Heart right ventricle (tissue), 16 donors: ENCODE measurements at regions of chr4 and their contacts with region 1.

Region 1: DNA sequence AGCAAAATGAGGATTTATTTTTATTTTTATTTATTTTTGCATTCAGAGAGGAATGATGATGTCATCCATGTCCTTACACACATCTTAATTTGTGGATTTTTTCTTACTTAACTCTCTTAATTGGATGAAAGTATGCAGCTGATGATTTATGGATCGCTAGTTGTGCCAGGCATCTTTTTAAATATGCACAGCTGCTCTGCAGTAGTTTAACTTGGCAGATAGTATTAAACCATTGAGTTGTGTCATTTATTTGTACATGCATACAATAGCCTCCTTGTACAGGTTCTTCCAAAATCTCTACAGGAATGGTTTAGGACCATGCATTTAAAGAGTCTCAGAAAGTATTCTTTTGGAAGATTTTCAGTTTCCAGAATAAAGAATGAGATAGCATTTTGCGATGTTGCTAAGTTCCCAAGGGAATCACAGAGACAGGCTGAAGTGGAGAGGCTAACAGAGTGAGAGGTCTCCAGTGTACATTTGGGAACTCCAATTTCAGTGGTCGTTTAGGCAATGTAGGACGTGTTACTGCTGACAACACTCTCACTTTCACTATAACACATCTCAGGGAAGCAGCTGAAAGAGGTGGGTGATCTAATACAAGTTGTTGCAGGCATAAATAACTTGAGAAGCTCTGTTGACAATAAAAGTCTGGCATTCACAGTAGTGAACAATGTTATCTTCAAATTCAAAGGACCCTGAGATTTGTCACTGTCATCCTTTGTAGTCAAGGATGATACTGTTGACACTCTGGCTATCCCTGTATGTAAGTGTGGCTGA is 49.9 kb upstream of the SCRG1 start:
- DNase-seq: no peak
- ATAC-seq: peak; percentile 9 to 88 (median 82)
- H3K4me3 ChIP-seq: peak overlapping the region in 5 of 10 donors; percentile 6 to 18 (median 10)
- H3K27ac ChIP-seq: peak overlapping the region in 8 of 10 donors; percentile 11 to 85 (median 66)
- H3K4me1 ChIP-seq: peaks cover 5 to 35% (median 19%) of the 10 kb centered on the region in 9 donors
- H3K27me3 ChIP-seq: no peaks in the 10 kb centered on the region
- CTCF ChIP-seq: no peak

Region 2: GRCh38 chr4:173494013-173494970 is 45.5 kb after region 1 on chr4:
- intact Hi-C with region 1: loop called in 1 of 10 experiments (anchors 5 kb)
- DNase-seq: peak; percentile 29 to 60
- ATAC-seq: peak; percentile 85 to 95 (median 91)
- H3K4me3 ChIP-seq: peak overlapping the region in 9 of 10 donors; percentile 19 to 54 (median 48)
- H3K27ac ChIP-seq: peak overlapping the region in 1 of 10 donors; percentile 27
- H3K4me1 ChIP-seq: peaks cover 0 to 38% (median 9%) of the 10 kb centered on the region in 9 donors
- H3K27me3 ChIP-seq: peaks cover 0 to 24% (median 0%) of the 10 kb centered on the region in 7 donors
- CTCF ChIP-seq: peak; percentile 49 to 86 (median 77)